PC-3 (cell line): ENCODE measurements at regions of chr1 and their contacts with region 1.

Region 1: GRCh38 chr1:112882271-112882744 is 73.7 kb downstream of the SLC16A1 start:
- DNase-seq: no peak
- ATAC-seq: no peak
- H3K4me3 ChIP-seq: no peak overlapping the region
- H3K27ac ChIP-seq: no peak overlapping the region
- H3K4me1 ChIP-seq: peaks cover 6% of the 10 kb centered on the region
- H3K27me3 ChIP-seq: no peaks in the 10 kb centered on the region
- CTCF ChIP-seq: no peak

Region 2: DNA sequence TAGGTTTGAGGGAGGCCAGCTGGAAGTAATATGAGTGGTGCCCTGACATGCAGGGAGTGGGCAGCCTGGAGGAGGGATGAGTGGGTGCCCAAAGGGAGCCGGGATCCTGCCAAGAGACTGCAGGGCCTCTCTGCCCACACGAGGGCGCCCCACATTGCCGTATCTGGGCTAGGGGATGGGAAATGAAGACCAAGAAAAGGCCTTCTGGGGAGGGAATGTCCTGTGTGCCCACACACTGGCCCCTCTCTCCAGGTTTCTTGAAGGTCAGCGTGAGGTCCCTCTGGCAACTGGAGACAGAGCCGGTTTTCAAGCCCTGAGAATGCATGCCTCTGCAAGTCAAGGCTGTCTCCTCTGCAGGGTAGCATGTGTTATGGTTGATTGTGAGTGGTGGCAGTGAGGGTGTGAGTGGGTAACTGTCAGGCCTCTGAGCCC is 73.0 kb before region 1 on chr1:
- CTCF ChIA-PET with region 1: no interaction called
- POLR2A ChIA-PET with region 1: no interaction called
- intact Hi-C with region 1: loop called (anchors 2 kb)
- DNase-seq: peak; percentile 86
- ATAC-seq: peak; percentile 92
- H3K4me3 ChIP-seq: no peak overlapping the region
- H3K27ac ChIP-seq: no peak overlapping the region
- H3K4me1 ChIP-seq: 0 out of 2 replicates have a peak, but pooled peaks cover 6% of the 10 kb centered on the region
- H3K27me3 ChIP-seq: no peaks in the 10 kb centered on the region
- CTCF ChIP-seq: peak; percentile 96

Region 3: GRCh38 chr1:112946683-112947082 is 64.4 kb after region 1 on chr1:
- CTCF ChIA-PET with region 1: no interaction called
- POLR2A ChIA-PET with region 1: no interaction called
- intact Hi-C with region 1: no loop called
- DNase-seq: no peak
- ATAC-seq: no peak
- H3K4me3 ChIP-seq: no peak overlapping the region
- H3K27ac ChIP-seq: no peak overlapping the region
- H3K4me1 ChIP-seq: peaks cover 6% of the 10 kb centered on the region; the same call in 1 of the 2 replicates
- H3K27me3 ChIP-seq: no peaks in the 10 kb centered on the region
- CTCF ChIP-seq: no peak